ENCODE measurements at regions of chr5 and their contacts with region 1.

Region 1: GRCh38 chr5:72366324-72366976 is 46.3 kb downstream of the PTCD2 start:
- DNase-seq: peak; percentile 61
- H3K4me3 Mint-ChIP-seq: no peak overlapping the region
- H3K27ac Mint-ChIP-seq: no peak overlapping the region
- H3K4me1 Mint-ChIP-seq: no peaks in the 10 kb centered on the region
- H3K27me3 Mint-ChIP-seq: no peaks in the 10 kb centered on the region

Region 2: GRCh38 chr5:72307968-72308852 is 58.2 kb before region 1 on chr5:
- CTCF ChIA-PET with region 1: no interaction called
- intact Hi-C with region 1: no loop called
- DNase-seq: peak; percentile 94
- H3K4me3 Mint-ChIP-seq: peak overlapping the region; percentile 85
- H3K27ac Mint-ChIP-seq: peak overlapping the region; percentile 92
- H3K4me1 Mint-ChIP-seq: peaks cover 32% of the 10 kb centered on the region
- H3K27me3 Mint-ChIP-seq: no peaks in the 10 kb centered on the region

Region 3: GRCh38 chr5:72378636-72379290 is 12.3 kb after region 1 on chr5:
- CTCF ChIA-PET with region 1: no interaction called
- intact Hi-C with region 1: no loop called
- DNase-seq: no peak
- H3K4me3 Mint-ChIP-seq: no peak overlapping the region
- H3K27ac Mint-ChIP-seq: no peak overlapping the region
- H3K4me1 Mint-ChIP-seq: no peaks in the 10 kb centered on the region
- H3K27me3 Mint-ChIP-seq: peaks cover 3% of the 10 kb centered on the region

Region 4: DNA sequence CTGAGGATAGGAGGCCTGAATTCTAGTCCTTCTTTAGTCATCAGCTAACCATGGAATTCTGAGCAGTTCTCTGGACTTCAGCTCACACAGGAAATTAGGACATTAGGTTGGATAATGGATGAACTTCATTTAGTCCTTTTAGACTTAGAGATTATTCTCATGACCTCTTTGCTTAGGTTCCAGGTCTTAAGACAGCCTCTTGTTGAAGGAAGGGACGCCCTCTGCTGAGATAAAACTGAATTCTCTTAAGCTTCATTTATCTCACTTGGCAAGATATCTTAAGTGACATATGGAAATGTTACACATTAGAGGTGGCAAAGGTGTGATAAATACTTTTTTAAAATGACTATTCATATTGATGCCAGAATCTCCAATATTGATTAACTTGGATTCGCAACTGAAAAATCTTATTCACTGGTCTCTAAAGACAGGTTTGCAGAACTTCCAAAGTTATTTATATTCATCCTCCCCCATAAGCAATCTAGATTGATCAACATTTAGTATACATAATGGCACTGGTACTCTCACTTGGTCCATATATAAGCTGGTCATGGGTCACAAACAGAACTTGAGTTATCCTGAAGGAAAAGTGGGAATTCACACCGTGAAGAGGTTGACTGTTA is 157.6 kb after region 1 on chr5:
- CTCF ChIA-PET with region 1: interaction called, 7 read pairs
- intact Hi-C with region 1: loop called (anchors 1 kb)
- DNase-seq: no peak
- H3K4me3 Mint-ChIP-seq: no peak overlapping the region
- H3K27ac Mint-ChIP-seq: no peak overlapping the region
- H3K4me1 Mint-ChIP-seq: no peaks in the 10 kb centered on the region
- H3K27me3 Mint-ChIP-seq: no peaks in the 10 kb centered on the region

Region 5: DNA sequence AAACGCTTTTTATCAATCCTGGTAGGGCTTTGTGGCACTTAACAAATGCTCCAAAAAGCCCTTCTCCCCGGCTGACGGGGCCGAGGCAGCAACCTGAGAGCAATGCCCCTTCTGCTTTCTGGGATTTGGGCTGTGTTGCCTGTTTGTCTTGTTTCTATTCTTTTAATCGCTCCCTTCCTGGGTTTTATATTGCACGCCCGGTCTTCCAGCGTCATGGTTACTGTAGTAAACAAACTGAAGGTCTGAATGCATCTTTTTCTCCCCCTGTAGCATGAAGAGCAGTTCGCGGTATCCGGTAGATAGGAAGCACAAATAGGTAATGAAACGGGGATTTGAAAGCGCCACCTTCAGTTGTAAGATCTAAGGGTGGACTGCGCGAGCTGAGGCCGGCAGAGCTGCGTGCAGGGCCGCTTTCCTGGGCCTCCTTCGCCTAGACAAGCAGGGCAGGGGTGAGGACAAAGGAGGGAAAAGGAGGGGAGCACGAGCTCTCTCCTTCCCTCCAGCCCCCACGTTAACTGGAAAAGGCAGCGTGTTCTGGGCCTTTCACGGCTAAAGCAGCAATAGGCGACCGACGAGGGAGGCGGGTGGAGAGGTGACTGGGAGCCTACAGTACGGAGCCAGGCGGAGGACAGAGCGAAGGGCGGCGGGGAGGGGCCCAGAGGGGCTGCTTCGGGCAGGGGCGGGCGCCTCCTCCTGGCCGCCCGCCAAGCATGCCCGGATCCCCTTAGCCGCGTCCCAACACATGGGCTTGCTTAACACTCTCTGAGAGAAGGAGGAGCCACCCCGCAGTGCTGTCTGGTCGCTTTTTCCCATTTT is 190.1 kb after region 1 on chr5:
- CTCF ChIA-PET with region 1: interaction called, 5 read pairs
- intact Hi-C with region 1: loop called (anchors 10 kb)
- DNase-seq: peak; percentile 46
- H3K4me3 Mint-ChIP-seq: peak overlapping the region; percentile 59
- H3K27ac Mint-ChIP-seq: no peak overlapping the region
- H3K4me1 Mint-ChIP-seq: peaks cover 25% of the 10 kb centered on the region
- H3K27me3 Mint-ChIP-seq: peaks cover 50% of the 10 kb centered on the region

Region 6: GRCh38 chr5:72584466-72584865 is 218.0 kb after region 1 on chr5:
- CTCF ChIA-PET with region 1: no interaction called
- intact Hi-C with region 1: loop called (anchors 1 kb)
- DNase-seq: no peak
- H3K4me3 Mint-ChIP-seq: no peak overlapping the region
- H3K27ac Mint-ChIP-seq: no peak overlapping the region
- H3K4me1 Mint-ChIP-seq: no peaks in the 10 kb centered on the region
- H3K27me3 Mint-ChIP-seq: peaks cover 14% of the 10 kb centered on the region

Region 7: GRCh38 chr5:72847989-72848473 is 481.6 kb after region 1 on chr5:
- CTCF ChIA-PET with region 1: no interaction called
- intact Hi-C with region 1: loop called (anchors 5 kb)
- DNase-seq: peak; percentile 90
- H3K4me3 Mint-ChIP-seq: peak overlapping the region; percentile 97
- H3K27ac Mint-ChIP-seq: peak overlapping the region; percentile 97
- H3K4me1 Mint-ChIP-seq: peaks cover 49% of the 10 kb centered on the region
- H3K27me3 Mint-ChIP-seq: no peaks in the 10 kb centered on the region

Measured in activated naive CD4-positive, alpha-beta T cell treated with anti-CD3 and anti-CD28 coated beads for 36 hours (primary cell).